ENCODE measurements at regions of chr2 and their contacts with region 1.

Region 1: GRCh38 chr2:38315707-38316333 is 61.3 kb downstream of the ATL2 start:
- DNase-seq: peak; percentile 59
- ATAC-seq: peak; percentile 85
- H3K4me3 ChIP-seq: no peak overlapping the region
- H3K27ac ChIP-seq: no peak overlapping the region
- H3K4me1 ChIP-seq: no peaks in the 10 kb centered on the region
- H3K27me3 ChIP-seq: no peaks in the 10 kb centered on the region
- CTCF ChIP-seq: peak; percentile 81
- POLR2A ChIP-seq: no peak
- RAD21 ChIP-seq: peak; percentile 78

Region 2: DNA sequence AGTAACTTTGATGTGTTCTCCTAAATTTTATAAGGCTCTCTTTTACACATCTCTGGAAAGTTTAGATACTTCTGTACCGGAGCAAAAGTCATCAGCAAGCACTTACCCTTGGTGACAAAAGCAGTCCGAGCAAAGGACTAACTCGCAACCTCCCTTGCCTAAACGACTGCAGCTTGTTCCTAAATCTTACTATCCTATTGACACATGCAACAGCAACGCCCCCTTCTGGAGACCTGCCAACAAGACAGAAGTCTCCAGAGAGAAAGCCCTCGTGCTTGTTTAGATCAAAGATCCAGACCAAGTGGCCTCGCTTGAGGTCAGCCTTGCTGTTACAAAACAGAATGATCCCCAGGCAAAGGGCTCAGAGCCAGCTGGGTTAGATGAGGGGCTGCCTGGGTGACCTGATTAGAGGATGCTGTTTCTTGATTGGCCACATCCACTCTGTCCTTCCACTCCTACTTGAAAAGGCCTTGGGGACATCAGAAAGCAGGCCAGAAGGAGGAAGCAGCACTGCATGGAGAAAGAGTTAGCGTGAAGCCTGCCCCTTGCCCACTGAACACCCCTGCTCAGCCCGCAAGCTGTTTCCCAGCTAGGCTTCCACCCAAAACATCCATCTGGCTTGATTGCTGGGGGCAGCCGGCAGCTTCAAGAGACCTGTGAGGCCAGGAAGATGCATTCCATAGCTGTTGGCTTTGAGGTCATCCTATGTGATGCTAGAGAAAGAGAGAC is 192.7 kb after region 1 on chr2:
- CTCF ChIA-PET with region 1: interaction called, 4 read pairs
- POLR2A ChIA-PET with region 1: no interaction called
- dilution Hi-C with region 1: no loop called
- in situ Hi-C with region 1: loop called (anchors 25 kb)
- intact Hi-C with region 1: loop called (anchors 2 kb)
- DNase-seq: peak; percentile 66
- ATAC-seq: no peak
- H3K4me3 ChIP-seq: no peak overlapping the region
- H3K27ac ChIP-seq: no peak overlapping the region
- H3K4me1 ChIP-seq: peaks cover 13% of the 10 kb centered on the region
- H3K27me3 ChIP-seq: peaks cover 7% of the 10 kb centered on the region; the same call in 1 of the 2 replicates
- CTCF ChIP-seq: peak; percentile 40
- POLR2A ChIP-seq: no peak
- RAD21 ChIP-seq: peak; percentile 43

Region 3: GRCh38 chr2:38581193-38582147 is 265.6 kb after region 1 on chr2:
- CTCF ChIA-PET with region 1: interaction called, 3 read pairs
- POLR2A ChIA-PET with region 1: interaction called, 5 read pairs
- dilution Hi-C with region 1: no loop called
- in situ Hi-C with region 1: no loop called
- intact Hi-C with region 1: loop called (anchors 5 kb)
- DNase-seq: peak; percentile 82
- ATAC-seq: peak; percentile 75
- H3K4me3 ChIP-seq: no peak overlapping the region
- H3K27ac ChIP-seq: no peak overlapping the region
- H3K4me1 ChIP-seq: peaks cover 5% of the 10 kb centered on the region
- H3K27me3 ChIP-seq: no peaks in the 10 kb centered on the region
- CTCF ChIP-seq: peak; percentile 79
- POLR2A ChIP-seq: no peak
- RAD21 ChIP-seq: peak; percentile 83

Region 4: GRCh38 chr2:38734299-38735058 is 418.7 kb after region 1 on chr2:
- CTCF ChIA-PET with region 1: no interaction called
- POLR2A ChIA-PET with region 1: no interaction called
- dilution Hi-C with region 1: no loop called
- in situ Hi-C with region 1: loop called (anchors 5 kb)
- intact Hi-C with region 1: loop called (anchors 5 kb)
- DNase-seq: no peak
- ATAC-seq: no peak
- H3K4me3 ChIP-seq: no peak overlapping the region
- H3K27ac ChIP-seq: no peak overlapping the region
- H3K4me1 ChIP-seq: no peaks in the 10 kb centered on the region
- H3K27me3 ChIP-seq: no peaks in the 10 kb centered on the region
- CTCF ChIP-seq: no peak
- POLR2A ChIP-seq: no peak
- RAD21 ChIP-seq: no peak